ENCODE measurements at regions of chr2 and their contacts with region 1.

Region 1: DNA sequence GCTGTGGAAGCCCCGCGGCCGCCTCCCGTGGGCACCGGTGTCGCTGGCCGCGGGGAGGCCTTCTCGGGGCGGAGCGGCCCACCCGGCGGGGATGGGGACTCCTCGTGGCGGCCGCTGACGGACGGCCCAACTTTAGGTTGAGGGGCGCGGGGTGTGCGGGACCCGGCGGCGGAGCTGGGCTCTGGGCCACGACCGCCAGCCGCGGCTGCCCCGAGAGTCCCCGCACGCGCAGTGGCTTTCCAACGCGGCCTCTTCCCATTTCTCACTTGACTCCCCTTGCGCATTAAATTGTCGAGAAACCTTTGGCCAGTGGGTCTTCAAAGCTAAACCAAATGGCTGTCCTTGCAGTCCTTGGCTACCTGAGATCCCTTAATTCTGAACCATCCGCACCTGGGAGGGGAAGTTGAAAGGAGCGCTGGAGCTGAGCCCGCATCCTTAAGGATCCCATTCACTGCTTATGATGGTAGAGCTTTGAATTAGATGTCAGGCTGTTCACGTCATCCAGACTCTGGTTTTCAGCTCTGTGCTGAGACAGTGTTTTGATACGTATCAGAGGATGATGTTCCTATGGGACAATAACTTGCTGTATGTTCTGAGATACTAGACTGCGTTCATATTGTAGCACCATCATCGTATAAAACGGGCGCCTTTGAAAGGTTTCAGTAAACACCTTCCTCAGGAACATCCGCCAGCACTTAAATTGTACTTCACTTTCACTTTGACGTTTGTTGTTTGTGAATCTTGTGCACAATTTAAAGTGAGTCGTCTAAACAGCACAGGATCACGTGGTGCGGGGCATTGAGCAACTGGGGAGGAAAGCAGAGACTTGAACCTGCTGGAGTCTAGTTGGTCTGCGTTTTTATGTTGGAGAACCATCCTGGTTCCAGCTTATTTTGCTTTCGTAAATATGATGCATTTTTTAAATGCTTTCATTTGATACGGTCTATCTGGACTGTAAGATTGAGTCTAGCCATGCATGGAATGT is 874 bp downstream of the CLIP4 start:
- DNase-seq: peak; percentile 74
- H3K4me3 Mint-ChIP-seq: peak overlapping the region; percentile 93
- H3K27ac Mint-ChIP-seq: peak overlapping the region; percentile 92
- H3K4me1 Mint-ChIP-seq: peaks cover 65% of the 10 kb centered on the region
- H3K27me3 Mint-ChIP-seq: peaks cover 9% of the 10 kb centered on the region

Region 2: DNA sequence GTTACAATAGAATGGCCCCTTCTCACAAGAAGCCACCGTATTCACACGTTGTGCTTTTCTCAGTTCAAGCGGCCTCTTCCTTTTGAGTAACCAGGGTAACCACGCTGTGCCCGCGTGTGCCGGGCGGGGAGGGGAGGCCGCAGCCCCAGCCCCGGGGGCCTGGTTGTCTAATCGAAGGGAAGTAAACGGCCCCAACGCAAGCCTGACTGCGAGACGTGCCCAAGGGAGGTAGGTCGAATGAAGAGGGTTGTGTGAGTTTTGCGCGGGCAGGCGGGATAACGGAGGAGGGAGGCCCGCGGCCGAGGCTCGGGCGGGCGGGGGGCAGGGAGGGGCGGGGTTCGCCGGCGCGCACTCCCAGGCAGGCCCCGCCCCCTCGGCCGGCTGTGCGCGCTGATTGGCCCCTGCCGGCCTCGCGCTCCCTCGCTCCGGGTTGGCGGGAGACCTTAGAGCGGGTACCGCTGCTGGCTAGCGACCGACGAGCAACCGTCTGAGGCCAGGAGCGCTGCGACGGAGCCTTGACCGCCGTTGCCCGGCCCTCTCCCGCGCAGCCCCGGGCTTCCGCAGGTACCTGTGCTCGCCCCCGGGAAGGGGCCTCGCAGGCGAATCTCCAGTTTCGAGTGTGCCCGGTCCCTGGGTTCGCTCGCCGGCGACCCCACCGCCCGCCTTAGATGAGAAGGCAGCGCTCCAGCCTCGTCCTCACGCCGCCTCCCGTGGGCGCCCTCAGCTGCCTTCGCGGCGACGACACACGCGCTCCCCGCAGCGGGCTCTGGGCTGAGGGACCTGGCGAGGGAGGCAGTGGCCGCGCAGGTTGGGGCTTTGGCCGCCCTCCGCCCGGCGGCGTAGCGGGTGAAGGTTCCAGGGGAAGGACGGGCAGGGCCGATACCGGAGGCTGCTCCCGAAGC is 305.5 kb before region 1 on chr2 and contains the start of gene SPDYA:
- intact Hi-C with region 1: loop called (anchors 5 kb)
- DNase-seq: peak; percentile 79
- H3K4me3 Mint-ChIP-seq: peak within 1 kb of the TSS; percentile 80
- H3K27ac Mint-ChIP-seq: peak within 1 kb of the TSS; percentile 40
- H3K4me1 Mint-ChIP-seq: peaks cover 12% of the 10 kb centered on the region
- H3K27me3 Mint-ChIP-seq: peaks cover 4% of the 10 kb centered on the region
- total RNA-seq, gene SPDYA: 1.1 and 1.7 TPM in 2 replicates

Region 3: GRCh38 chr2:28894470-28895177 is 221.5 kb before region 1 on chr2 and contains the start of gene WDR43:
- intact Hi-C with region 1: loop called (anchors 1 kb)
- DNase-seq: peak; percentile 99
- H3K4me3 Mint-ChIP-seq: peak within 1 kb of the TSS; percentile 100
- H3K27ac Mint-ChIP-seq: peak within 1 kb of the TSS; percentile 96
- H3K4me1 Mint-ChIP-seq: peaks cover 40% of the 10 kb centered on the region
- H3K27me3 Mint-ChIP-seq: no peaks in the 10 kb centered on the region
- total RNA-seq, gene WDR43: 188 and 190 TPM in 2 replicates

Region 4: DNA sequence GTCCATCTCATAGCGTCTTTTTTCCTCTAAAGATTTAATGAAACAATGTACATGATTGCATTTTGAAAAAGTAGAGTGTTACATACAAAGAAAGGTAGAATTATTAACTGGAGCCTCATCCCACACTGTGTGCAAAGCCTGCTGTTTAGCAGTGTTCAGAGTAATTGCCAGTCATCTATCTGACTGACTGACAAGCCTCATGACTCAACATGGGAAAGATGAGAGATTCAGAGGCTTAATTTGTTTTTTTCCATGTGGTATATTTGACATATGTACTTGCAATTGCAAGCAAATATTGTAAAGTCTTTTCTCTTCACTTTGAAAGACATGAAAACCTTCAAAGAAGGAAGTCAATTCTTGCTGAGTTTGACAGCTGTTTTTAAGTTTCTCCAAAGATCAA is 56.5 kb before region 1 on chr2:
- intact Hi-C with region 1: loop called (anchors 5 kb)
- DNase-seq: no peak
- H3K4me3 Mint-ChIP-seq: no peak overlapping the region
- H3K27ac Mint-ChIP-seq: peak overlapping the region; percentile 46
- H3K4me1 Mint-ChIP-seq: peaks cover 8% of the 10 kb centered on the region
- H3K27me3 Mint-ChIP-seq: no peaks in the 10 kb centered on the region

Region 5: DNA sequence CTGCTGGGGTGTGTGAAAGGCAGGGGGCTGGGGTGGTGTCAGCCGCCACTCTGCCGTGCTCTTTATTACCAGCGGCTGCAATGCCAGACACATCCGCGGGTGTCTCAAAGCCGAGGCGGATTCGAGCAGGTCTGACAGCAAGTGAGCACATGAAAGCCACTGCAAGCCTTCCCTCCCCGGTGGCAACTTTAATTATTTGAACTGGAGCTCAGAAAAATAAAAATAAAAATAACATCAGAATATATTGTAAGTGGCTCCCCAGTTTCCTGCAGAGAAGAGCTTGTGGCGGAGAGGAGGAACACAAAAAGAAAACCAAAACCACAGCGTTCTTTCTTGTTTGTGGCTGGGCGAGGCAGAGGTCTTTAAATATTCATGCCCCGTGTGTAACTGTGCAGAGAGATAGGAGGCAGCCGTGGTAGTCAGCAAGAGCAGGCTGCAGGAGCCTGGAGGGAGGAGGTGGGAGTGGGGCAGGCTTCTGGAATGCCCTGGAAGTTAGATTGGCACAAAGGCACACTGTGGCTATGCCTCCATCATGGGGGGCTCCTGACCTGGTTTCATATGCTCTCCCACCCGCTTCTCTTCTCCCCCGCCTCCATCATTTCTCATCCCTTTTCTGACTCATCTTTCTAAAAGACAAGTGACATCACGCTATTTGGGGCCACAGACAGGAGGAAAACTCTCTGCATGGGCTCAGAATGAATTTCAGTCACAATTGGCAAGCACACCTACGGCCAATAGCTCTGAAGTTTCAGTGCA is 198.9 kb after region 1 on chr2:
- intact Hi-C with region 1: loop called (anchors 1 kb)
- DNase-seq: peak; percentile 61
- H3K4me3 Mint-ChIP-seq: peak overlapping the region; percentile 66
- H3K27ac Mint-ChIP-seq: peak overlapping the region; percentile 86
- H3K4me1 Mint-ChIP-seq: peaks cover 65% of the 10 kb centered on the region
- H3K27me3 Mint-ChIP-seq: peaks cover 9% of the 10 kb centered on the region